ENCODE measurements at regions of chr1 and their contacts with region 1.

Region 1: GRCh38 chr1:34786521-34787325 is 5.7 kb downstream of the GJB3 start:
- DNase-seq: no peak
- H3K4me3 ChIP-seq: no peak overlapping the region
- H3K27ac ChIP-seq: no peak overlapping the region
- H3K4me1 ChIP-seq: peaks cover 4 to 10% (median 8%) of the 10 kb centered on the region in 4 donors
- H3K27me3 ChIP-seq: peaks cover 0 to 33% (median 11%) of the 10 kb centered on the region in 4 donors
- CTCF ChIP-seq: peak; percentile 59 to 80 (median 63)
- EP300 ChIP-seq: no peak
- POLR2A ChIP-seq: no peak

Region 2: GRCh38 chr1:34822202-34822601 is 35.5 kb after region 1 on chr1:
- intact Hi-C with region 1: no loop called
- DNase-seq: no peak
- H3K4me3 ChIP-seq: no peak overlapping the region
- H3K27ac ChIP-seq: no peak overlapping the region
- H3K4me1 ChIP-seq: peaks cover 0 to 14% (median 2%) of the 10 kb centered on the region in 4 donors
- H3K27me3 ChIP-seq: no peaks in the 10 kb centered on the region
- CTCF ChIP-seq: no peak
- EP300 ChIP-seq: no peak
- POLR2A ChIP-seq: no peak

Region 3: DNA sequence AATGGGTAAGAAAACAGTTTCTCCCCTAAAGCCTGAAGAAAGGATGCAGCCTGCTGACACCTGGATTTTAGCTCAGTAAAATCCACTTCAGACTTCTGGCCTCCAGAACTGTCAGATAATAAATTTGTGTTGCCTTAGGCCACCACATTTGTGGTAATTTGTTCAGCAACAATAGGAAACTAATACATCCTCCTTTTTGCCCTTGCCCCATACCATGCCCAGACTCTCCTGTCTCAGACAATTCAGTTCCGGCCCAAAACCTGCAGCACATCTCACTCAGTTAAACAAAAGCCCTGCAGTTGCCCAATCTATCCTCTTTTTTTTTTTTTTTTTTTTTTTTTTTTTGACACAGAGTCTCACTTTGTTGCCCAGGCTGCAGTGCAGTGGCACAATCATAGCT is 47.0 kb after region 1 on chr1:
- intact Hi-C with region 1: no loop called
- DNase-seq: peak; percentile 31
- H3K4me3 ChIP-seq: no peak overlapping the region
- H3K27ac ChIP-seq: no peak overlapping the region
- H3K4me1 ChIP-seq: peaks cover 7 to 33% (median 15%) of the 10 kb centered on the region in 4 donors
- H3K27me3 ChIP-seq: no peaks in the 10 kb centered on the region
- CTCF ChIP-seq: no peak
- EP300 ChIP-seq: no peak
- POLR2A ChIP-seq: no peak

Region 4: GRCh38 chr1:34852677-34853217 is 66.0 kb after region 1 on chr1:
- intact Hi-C with region 1: loop called (anchors 5 kb)
- DNase-seq: peak; percentile 94
- H3K4me3 ChIP-seq: peak overlapping the region in 1 of 4 donors; percentile 1
- H3K27ac ChIP-seq: peak overlapping the region; percentile 67 to 79 (median 72)
- H3K4me1 ChIP-seq: peaks cover 25 to 50% (median 42%) of the 10 kb centered on the region in 4 donors
- H3K27me3 ChIP-seq: no peaks in the 10 kb centered on the region
- CTCF ChIP-seq: peak; percentile 86 to 97 (median 97)
- EP300 ChIP-seq: no peak
- POLR2A ChIP-seq: no peak

Region 5: GRCh38 chr1:34865981-34866761 is 79.4 kb after region 1 on chr1:
- intact Hi-C with region 1: loop called (anchors 5 kb)
- DNase-seq: peak; percentile 98
- H3K4me3 ChIP-seq: peak overlapping the region; percentile 75 to 83 (median 79)
- H3K27ac ChIP-seq: peak overlapping the region; percentile 86 to 89 (median 86)
- H3K4me1 ChIP-seq: peaks cover 13 to 21% (median 18%) of the 10 kb centered on the region in 4 donors
- H3K27me3 ChIP-seq: no peaks in the 10 kb centered on the region
- CTCF ChIP-seq: peak; percentile 81 to 96 (median 95)
- EP300 ChIP-seq: no peak
- POLR2A ChIP-seq: no peak

Measured in esophagus muscularis mucosa (tissue), 4 donors.